Activated naive CD8-positive, alpha-beta T cell treated with anti-CD3 and anti-CD28 coated beads, Interleukin-2, amount 10 ng/mL, durations not matched to agents 7 days and 5 days (primary cell): ENCODE measurements at regions of chr19 and their contacts with region 1.

Region 1: GRCh38 chr19:1896508-1896907 is 8.7 kb upstream of the ADAT3 start:
- DNase-seq: no peak
- ATAC-seq: no peak
- H3K4me3 Mint-ChIP-seq: peak overlapping the region; percentile 85
- H3K27ac Mint-ChIP-seq: peak overlapping the region; percentile 99
- H3K4me1 Mint-ChIP-seq: peaks cover 20% of the 10 kb centered on the region
- H3K27me3 Mint-ChIP-seq: no peaks in the 10 kb centered on the region

Region 2: DNA sequence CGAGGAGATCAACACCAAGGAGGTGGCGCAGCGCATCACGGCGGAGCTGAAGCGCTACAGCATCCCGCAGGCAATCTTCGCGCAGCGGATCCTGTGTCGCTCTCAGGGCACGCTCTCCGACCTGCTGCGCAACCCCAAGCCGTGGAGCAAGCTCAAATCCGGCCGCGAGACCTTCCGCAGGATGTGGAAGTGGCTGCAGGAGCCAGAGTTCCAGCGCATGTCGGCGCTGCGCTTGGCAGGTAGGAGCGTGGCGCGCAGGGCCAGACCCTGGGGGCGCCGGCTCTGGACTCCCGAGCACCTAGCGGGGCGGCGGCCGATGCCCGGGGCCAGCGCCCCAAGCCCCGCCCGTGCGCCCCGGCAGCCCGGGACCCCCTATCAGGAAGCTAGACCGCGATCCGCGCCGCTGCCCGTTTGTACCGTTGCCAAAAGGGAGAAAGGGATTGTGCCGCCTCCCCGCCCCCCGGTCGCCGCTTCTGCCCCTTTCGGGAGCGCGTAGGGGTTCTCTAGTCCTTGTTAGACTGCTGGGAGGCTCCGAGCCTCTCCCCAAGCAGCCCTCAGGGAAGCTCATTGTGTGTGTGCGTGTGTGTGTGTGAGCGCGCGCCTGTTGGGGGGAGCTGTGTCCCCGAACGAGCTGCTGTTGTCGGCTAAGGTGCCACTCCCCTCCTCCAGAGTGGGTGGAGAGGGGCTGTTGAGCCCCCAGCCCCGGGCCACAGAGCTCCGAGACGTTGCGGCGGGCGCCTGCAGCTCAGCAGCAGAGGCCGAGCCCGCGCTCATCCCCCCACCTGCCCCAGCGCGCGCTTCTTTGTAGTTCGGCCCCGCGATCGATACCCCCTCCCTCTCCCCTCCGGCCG is 141.7 kb before region 1 on chr19:
- POLR2A ChIA-PET with region 1: no interaction called
- DNase-seq: peak; percentile 58
- ATAC-seq: no peak
- H3K4me3 Mint-ChIP-seq: no peak overlapping the region
- H3K27ac Mint-ChIP-seq: peak overlapping the region; percentile 67
- H3K4me1 Mint-ChIP-seq: peaks cover 12% of the 10 kb centered on the region
- H3K27me3 Mint-ChIP-seq: peaks cover 68% of the 10 kb centered on the region

Region 3: DNA sequence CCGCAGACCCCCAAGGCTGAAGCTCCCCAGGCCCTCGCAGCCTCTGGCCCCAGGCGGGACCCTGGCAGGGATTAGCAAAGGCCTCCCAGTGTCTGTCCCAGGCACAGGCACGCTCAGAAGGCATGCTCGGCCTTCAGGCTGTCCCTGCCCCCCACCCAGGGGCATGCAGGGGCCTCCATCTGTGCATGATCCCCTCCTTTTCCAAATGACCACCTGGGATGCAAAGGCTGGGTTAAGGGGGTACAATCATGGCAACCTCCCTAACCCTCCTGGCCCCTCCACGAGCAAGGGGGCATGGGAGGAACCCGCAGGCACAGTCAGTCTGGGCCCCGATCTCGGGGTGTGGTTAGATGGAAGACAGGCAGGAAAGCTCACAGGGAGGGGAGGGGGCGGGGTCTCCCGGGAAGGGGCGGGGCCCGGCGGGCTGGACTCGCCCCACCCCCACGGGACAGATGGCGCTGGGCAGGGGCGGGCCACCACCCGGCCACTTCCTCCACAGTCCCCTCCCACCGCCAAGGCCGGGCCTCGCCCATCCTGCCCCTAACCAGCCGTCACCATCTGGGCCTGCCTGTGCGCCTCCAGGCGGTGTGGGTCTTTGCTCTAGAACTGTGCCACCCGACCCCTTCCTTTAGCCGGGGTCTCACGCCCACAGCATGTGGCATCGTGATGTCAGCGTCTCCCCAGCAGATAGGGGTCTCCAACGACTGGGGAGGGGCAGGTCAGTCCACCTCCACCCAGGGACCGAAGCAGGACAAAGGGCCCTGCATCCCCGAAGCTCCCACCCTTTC is 41.3 kb before region 1 on chr19:
- POLR2A ChIA-PET with region 1: interaction called, 34 read pairs
- DNase-seq: peak; percentile 91
- ATAC-seq: peak; percentile 79
- H3K4me3 Mint-ChIP-seq: peak overlapping the region; percentile 87
- H3K27ac Mint-ChIP-seq: peak overlapping the region; percentile 96
- H3K4me1 Mint-ChIP-seq: peaks cover 24% of the 10 kb centered on the region
- H3K27me3 Mint-ChIP-seq: no peaks in the 10 kb centered on the region

Region 4: DNA sequence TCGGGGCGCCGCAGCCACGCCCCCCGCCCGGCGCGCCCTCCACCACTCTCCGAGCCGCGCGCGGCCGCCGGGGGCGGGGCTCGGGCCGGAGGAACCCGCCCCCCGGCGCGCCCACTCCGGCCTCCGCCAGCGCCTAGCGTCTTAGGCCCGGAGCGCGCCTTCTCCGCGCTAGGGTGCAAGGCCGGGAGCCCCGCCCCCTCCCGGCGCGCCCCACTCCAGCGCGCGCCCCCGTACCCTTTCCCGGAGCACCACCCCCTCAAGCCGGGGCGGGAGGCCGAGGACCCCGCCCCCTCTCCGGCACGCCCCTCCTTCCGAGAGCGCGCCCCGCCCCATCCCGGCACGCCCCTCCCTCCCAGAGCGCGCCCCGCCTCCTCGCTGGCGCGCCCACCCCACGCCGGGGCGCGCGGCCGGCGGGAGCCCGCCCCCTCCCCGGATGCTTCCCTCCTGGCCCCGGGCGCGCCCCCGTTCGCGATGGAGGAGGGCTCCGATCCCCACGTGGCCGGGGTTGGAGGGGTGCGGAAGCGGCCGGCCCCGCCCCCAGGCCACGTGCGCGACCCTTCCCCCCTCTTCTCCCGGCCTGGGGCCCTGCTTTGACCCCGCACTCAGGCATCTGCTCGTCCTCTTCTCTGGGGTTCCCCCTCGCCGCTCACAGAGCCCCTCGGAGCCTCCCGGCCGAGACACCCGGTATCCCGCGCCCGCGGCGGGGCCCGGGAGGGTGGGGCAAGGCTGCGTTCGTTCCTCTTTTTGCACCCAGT is 32.6 kb before region 1 on chr19:
- POLR2A ChIA-PET with region 1: interaction called, 18 read pairs
- DNase-seq: peak; percentile 97
- ATAC-seq: peak; percentile 73
- H3K4me3 Mint-ChIP-seq: peak overlapping the region; percentile 82
- H3K27ac Mint-ChIP-seq: peak overlapping the region; percentile 82
- H3K4me1 Mint-ChIP-seq: peaks cover 18% of the 10 kb centered on the region
- H3K27me3 Mint-ChIP-seq: no peaks in the 10 kb centered on the region

Region 5: GRCh38 chr19:1875646-1876495 is 20.6 kb before region 1 on chr19:
- POLR2A ChIA-PET with region 1: interaction called, 103 read pairs
- DNase-seq: peak; percentile 97
- ATAC-seq: peak; percentile 84
- H3K4me3 Mint-ChIP-seq: peak overlapping the region; percentile 99
- H3K27ac Mint-ChIP-seq: peak overlapping the region; percentile 99
- H3K4me1 Mint-ChIP-seq: peaks cover 18% of the 10 kb centered on the region
- H3K27me3 Mint-ChIP-seq: no peaks in the 10 kb centered on the region

Region 6: DNA sequence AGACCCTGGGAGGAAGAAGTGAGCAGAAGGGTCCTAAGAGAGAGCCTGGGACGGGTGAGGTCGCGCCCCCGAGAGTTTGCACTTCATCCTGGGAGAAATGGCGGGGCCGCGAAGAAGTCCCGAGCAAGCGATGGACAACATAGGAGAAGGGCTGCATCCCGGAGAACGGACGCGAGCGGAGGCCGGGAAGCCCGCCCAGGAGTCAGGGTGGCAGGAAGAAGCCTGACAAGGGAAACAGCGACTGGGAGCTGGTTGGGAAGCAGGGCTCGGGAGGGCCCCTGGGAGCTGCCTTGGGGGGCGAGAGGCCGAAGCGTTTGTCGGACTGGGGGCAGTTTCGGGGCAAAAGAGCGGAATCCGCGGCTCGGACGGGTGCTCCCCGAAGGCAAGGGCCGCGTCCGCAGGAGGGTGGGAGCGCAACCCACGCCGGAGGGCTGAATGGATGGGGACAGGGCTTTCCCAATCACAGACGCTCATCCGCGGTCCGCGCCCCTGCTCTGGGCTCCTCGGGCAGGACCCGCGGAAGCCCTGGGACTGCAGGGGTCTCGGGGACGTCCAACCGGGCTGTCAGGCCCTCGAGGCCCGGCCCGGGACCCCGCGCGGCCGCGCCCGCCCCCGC is 11.7 kb before region 1 on chr19:
- POLR2A ChIA-PET with region 1: interaction called, 103 read pairs
- DNase-seq: peak; percentile 60
- ATAC-seq: no peak
- H3K4me3 Mint-ChIP-seq: peak overlapping the region; percentile 99
- H3K27ac Mint-ChIP-seq: peak overlapping the region; percentile 99
- H3K4me1 Mint-ChIP-seq: peaks cover 28% of the 10 kb centered on the region
- H3K27me3 Mint-ChIP-seq: no peaks in the 10 kb centered on the region

Region 7: DNA sequence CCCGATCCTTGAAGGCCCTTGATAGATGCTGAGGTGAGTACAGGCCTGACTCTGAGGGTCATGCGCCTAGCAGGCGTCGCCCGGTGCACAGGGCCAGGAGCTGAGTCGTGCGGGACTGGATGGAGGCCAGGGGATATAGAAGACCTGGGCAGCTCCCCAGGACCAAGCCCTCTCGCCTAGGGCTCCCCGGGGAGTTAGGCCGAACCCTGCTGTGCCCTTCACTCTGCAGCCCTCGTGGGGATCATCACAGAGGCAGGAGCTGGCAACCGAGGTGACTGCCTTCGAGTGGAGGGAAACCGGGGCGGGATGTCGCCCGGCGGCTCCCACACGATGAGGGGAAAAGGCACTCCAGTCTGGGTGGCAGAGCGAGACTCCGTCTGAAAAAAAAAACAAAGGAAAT is 56.1 kb after region 1 on chr19:
- POLR2A ChIA-PET with region 1: no interaction called
- DNase-seq: no peak
- ATAC-seq: no peak
- H3K4me3 Mint-ChIP-seq: no peak overlapping the region
- H3K27ac Mint-ChIP-seq: no peak overlapping the region
- H3K4me1 Mint-ChIP-seq: peaks cover 2% of the 10 kb centered on the region
- H3K27me3 Mint-ChIP-seq: no peaks in the 10 kb centered on the region